Endothelial cell of umbilical vein (primary cell): ENCODE measurements at regions of chr7 and their contacts with region 1.

Region 1: DNA sequence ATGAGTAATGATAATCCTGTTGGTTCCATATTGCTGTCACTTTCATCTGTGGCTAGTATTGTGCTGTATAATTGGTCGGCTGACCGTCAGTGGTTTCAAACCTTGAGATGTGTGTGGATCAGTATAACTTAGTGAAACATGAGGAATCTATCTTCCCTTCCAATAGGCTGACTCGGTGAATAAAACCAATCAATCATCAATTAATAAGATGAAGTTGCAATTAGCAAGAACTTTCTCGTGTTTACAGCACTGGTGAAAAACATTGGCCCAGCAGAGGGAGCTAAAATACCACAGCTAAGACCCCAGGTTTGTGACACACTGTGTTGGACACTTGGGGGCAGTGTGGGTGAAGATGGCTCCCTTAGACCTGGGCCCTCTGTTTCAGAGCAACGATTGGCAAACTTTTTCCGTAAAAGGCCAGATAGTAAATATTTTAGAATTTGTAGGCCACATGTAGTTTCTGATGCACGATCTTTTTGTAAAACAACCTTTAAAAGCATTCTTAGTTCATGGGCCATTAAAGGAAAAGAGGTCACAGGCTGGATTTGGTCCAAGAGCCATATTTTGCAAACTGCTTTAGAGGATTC is 47.8 kb downstream of the STRA8 start:
- DNase-seq: peak; percentile 87
- H3K4me3 ChIP-seq: no peak overlapping the region
- H3K27ac ChIP-seq: peak overlapping the region; percentile 10
- H3K4me1 ChIP-seq: peaks cover 15% of the 10 kb centered on the region
- H3K27me3 ChIP-seq: no peaks in the 10 kb centered on the region
- CTCF ChIP-seq: peak; percentile 94 to 96
- POLR2A ChIP-seq: no peak

Region 2: DNA sequence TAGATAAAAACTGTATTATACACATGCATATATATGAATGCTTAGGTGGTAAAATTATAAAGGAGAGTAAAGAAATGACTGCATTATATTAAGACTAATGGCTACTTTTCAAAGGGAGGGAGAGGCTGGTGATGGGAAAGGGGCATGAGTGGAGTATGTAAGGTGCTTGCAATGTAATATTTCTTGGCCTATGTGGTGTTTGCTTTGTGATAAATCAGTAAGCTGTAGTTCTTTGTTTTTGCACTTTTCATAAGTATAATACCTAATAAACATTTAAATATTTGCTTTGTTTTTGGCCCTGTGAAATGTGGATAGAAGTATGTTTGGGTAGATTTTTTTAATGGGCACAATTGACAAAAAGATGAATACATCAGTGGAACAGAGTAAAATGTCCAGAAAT is 269.2 kb before region 1 on chr7:
- CTCF ChIA-PET with region 1: no interaction called
- POLR2A ChIA-PET with region 1: no interaction called
- dilution Hi-C with region 1: no loop called
- intact Hi-C with region 1: no loop called
- DNase-seq: no peak
- H3K4me3 ChIP-seq: no peak overlapping the region
- H3K27ac ChIP-seq: no peak overlapping the region
- H3K4me1 ChIP-seq: no peaks in the 10 kb centered on the region
- H3K27me3 ChIP-seq: no peaks in the 10 kb centered on the region
- CTCF ChIP-seq: no peak
- POLR2A ChIP-seq: no peak

Region 3: DNA sequence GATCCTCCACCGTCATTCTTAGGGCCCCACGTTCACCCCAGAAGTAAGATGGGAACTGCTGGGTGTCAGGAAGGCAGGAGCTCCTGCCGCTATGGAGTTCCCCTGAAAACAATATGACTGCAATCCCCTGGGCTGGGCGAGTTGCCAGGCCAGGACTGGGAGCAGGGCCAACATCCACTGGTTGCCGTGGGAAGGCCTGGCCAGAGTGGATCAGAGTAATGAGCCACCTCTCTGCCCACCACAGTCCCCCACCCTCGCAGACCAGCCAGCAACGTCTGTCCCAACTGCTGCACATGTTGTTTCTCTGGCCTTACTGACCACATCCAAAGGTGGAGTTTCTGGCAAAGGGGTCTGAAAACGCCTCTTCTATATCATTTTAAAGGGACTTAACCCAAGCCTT is 38.8 kb after region 1 on chr7:
- CTCF ChIA-PET with region 1: interaction called, 3 read pairs
- POLR2A ChIA-PET with region 1: no interaction called
- dilution Hi-C with region 1: no loop called
- intact Hi-C with region 1: loop called (anchors 5 kb)
- DNase-seq: peak; percentile 97
- H3K4me3 ChIP-seq: no peak overlapping the region
- H3K27ac ChIP-seq: peak overlapping the region; percentile 16
- H3K4me1 ChIP-seq: peaks cover 11% of the 10 kb centered on the region
- H3K27me3 ChIP-seq: no peaks in the 10 kb centered on the region
- CTCF ChIP-seq: no peak
- POLR2A ChIP-seq: no peak

Region 4: DNA sequence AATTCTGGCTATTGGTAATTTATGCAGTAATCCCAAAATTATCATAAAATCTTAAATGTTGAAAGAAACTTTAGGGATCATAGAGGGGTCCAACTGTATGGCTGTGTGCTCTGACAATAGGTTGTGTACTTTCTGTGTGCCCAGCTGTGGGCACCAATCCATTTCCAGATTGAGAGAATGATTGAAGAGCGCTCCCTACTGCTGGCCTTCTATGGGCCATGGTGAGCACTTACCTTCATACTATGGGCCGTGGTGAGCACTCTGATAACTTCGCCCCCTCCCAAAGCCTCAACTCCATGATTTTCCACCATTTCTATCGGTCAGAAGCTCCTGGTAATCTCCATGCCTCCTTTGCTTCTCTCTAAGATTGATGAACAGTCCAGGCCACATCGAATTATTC is 70.8 kb after region 1 on chr7:
- CTCF ChIA-PET with region 1: interaction called, 5 read pairs
- POLR2A ChIA-PET with region 1: no interaction called
- dilution Hi-C with region 1: no loop called
- intact Hi-C with region 1: loop called (anchors 1 kb)
- DNase-seq: no peak
- H3K4me3 ChIP-seq: no peak overlapping the region
- H3K27ac ChIP-seq: no peak overlapping the region
- H3K4me1 ChIP-seq: no peaks in the 10 kb centered on the region
- H3K27me3 ChIP-seq: peaks cover 0 to 9% of the 10 kb centered on the region in 2 experiments
- CTCF ChIP-seq: peak in 1 of 2 donors; percentile 3
- POLR2A ChIP-seq: no peak

Region 5: GRCh38 chr7:135509903-135510602 is 228.6 kb after region 1 on chr7 and contains the start of gene CNOT4:
- CTCF ChIA-PET with region 1: interaction called, 5 read pairs
- POLR2A ChIA-PET with region 1: no interaction called
- dilution Hi-C with region 1: no loop called
- intact Hi-C with region 1: loop called (anchors 1 kb)
- DNase-seq: peak; percentile 98
- H3K4me3 ChIP-seq: peak within 1 kb of the TSS; percentile 92 to 95 (median 93)
- H3K27ac ChIP-seq: peak within 1 kb of the TSS; percentile 83
- H3K4me1 ChIP-seq: peaks cover 19% of the 10 kb centered on the region
- H3K27me3 ChIP-seq: no peaks in the 10 kb centered on the region
- CTCF ChIP-seq: no peak
- POLR2A ChIP-seq: peak; percentile 92
- total RNA-seq, gene CNOT4: 20.9 and 21.7 TPM in 2 replicates

Region 6: DNA sequence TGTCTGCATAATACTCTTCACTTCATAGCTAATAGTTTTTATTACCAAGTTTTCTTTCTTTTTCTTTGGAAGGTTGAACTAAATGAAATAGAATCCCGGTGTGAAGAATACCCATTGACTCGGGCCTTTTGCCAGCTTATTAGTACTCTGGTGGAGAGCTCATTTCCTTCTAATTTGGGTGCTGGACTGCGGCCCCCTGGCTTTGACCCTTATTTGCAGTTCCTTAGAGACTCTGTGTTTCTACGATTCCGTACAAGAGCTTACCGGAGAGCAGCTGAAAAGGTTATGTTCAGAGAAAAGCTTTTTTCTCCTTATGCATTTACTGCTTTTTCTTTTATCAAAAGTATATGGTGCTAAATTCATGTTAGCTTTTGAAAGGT is 316.5 kb after region 1 on chr7:
- CTCF ChIA-PET with region 1: interaction called, 13 read pairs
- POLR2A ChIA-PET with region 1: no interaction called
- dilution Hi-C with region 1: no loop called
- intact Hi-C with region 1: no loop called
- DNase-seq: no peak
- H3K4me3 ChIP-seq: no peak overlapping the region
- H3K27ac ChIP-seq: no peak overlapping the region
- H3K4me1 ChIP-seq: no peaks in the 10 kb centered on the region
- H3K27me3 ChIP-seq: no peaks in the 10 kb centered on the region
- CTCF ChIP-seq: no peak
- POLR2A ChIP-seq: no peak

Region 7: DNA sequence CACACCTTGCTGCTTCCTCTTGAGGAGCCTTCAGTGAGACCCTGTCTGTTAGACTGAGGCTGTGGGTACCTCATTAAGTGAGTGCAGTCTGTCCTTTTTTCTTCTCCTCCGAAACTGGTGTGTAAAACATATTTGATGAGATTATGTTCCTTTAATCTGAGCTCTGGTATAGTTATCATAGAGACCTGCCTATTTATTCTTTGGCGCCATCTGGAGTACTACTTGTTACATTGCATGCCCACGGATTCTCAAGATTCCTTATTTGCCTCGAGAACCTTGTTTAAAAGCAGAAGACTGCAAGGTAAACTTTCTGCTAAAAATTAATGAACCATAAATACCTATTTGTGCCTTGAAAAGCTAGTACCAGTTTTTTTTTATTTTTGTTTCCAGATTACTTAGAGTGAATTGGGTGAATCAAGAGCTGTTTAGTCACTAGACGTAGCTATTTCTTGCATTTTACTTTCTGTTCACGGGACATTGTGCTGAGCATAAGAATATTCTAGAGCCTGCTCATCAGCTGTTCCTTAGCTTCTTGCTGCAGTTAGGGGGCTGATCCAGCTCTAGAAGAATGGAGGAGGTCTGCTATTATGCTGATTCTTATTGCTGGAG is 363.9 kb after region 1 on chr7:
- CTCF ChIA-PET with region 1: interaction called, 173 read pairs
- POLR2A ChIA-PET with region 1: no interaction called
- dilution Hi-C with region 1: no loop called
- intact Hi-C with region 1: loop called (anchors 1 kb)
- DNase-seq: peak; percentile 60
- H3K4me3 ChIP-seq: no peak overlapping the region
- H3K27ac ChIP-seq: no peak overlapping the region
- H3K4me1 ChIP-seq: no peaks in the 10 kb centered on the region
- H3K27me3 ChIP-seq: no peaks in the 10 kb centered on the region
- CTCF ChIP-seq: peak; percentile 35 to 57
- POLR2A ChIP-seq: no peak

Region 8: GRCh38 chr7:136009488-136010079 is 728.1 kb after region 1 on chr7:
- CTCF ChIA-PET with region 1: no interaction called
- POLR2A ChIA-PET with region 1: no interaction called
- dilution Hi-C with region 1: no loop called
- intact Hi-C with region 1: loop called (anchors 1 kb)
- DNase-seq: peak; percentile 62
- H3K4me3 ChIP-seq: no peak overlapping the region
- H3K27ac ChIP-seq: no peak overlapping the region
- H3K4me1 ChIP-seq: no peaks in the 10 kb centered on the region
- H3K27me3 ChIP-seq: peaks cover 0 to 5% of the 10 kb centered on the region in 2 experiments
- CTCF ChIP-seq: peak; percentile 29 to 40
- POLR2A ChIP-seq: no peak